Naive thymus-derived CD8-positive, alpha-beta T cell (primary cell): ENCODE measurements at regions of chr5 and their contacts with region 1.

Region 1: DNA sequence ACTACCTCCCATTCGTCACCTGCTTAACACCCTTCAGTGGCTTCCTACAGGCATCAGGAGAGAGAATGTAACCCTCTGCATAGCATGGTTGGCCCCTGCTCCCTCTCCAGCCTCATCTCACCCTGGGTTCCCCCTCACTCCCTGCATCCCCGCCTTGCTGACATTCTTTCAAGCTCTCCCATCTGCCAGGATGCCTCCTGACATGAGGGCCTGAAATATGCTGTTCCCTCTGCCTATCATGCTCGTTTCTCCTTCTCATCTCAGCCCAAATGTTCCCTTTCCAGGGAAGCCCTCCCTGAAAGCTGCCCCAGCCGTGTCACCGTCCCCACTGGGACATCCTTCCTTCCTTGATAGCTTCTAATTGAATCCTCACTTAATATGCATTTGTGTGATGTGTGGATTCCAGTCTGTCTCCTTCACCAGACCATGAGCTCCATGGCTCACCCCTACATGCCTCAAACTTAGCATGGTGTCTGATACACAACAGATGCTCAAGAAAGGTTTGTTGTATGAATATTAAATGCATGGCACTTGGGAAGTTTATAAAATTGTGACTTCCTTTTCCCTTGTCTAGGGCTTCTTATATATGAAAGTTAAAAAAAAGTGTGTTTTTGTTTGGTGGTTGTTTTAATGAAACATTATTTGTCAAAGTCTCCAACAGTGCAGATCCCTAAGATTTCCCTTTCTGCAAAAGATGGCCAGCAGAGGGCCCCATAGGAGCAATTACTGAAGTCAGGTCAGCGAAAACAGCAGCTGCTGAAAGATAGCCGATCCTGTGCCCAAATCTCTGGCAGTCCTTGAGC is 7.3 kb upstream of the C5orf58 start:
- DNase-seq: peak; percentile 44 to 87 (median 72)
- ATAC-seq: peak; percentile 54 to 86
- H3K4me3 Mint-ChIP-seq: peak overlapping the region in 1 of 10 donors; percentile 43
- H3K27ac Mint-ChIP-seq: peak overlapping the region in 5 of 10 donors; percentile 10 to 76 (median 42)
- H3K4me1 Mint-ChIP-seq: peaks cover 3 to 5% (median 4%) of the 10 kb centered on the region in 4 donors
- H3K27me3 Mint-ChIP-seq: no peaks in the 10 kb centered on the region

Region 2: GRCh38 chr5:169029661-169030274 is 1195.8 kb before region 1 on chr5:
- POLR2A ChIA-PET with region 1: no interaction called
- DNase-seq: no peak
- ATAC-seq: no peak
- H3K4me3 Mint-ChIP-seq: no peak overlapping the region
- H3K27ac Mint-ChIP-seq: no peak overlapping the region
- H3K4me1 Mint-ChIP-seq: no peaks in the 10 kb centered on the region
- H3K27me3 Mint-ChIP-seq: peaks cover 4 to 16% (median 6%) of the 10 kb centered on the region in 5 donors

Region 3: GRCh38 chr5:170148430-170149205 is 76.9 kb before region 1 on chr5:
- POLR2A ChIA-PET with region 1: no interaction called
- DNase-seq: no peak
- ATAC-seq: no peak
- H3K4me3 Mint-ChIP-seq: no peak overlapping the region
- H3K27ac Mint-ChIP-seq: no peak overlapping the region
- H3K4me1 Mint-ChIP-seq: no peaks in the 10 kb centered on the region
- H3K27me3 Mint-ChIP-seq: peaks cover 0 to 7% (median under 1%) of the 10 kb centered on the region in 5 donors

Region 4: DNA sequence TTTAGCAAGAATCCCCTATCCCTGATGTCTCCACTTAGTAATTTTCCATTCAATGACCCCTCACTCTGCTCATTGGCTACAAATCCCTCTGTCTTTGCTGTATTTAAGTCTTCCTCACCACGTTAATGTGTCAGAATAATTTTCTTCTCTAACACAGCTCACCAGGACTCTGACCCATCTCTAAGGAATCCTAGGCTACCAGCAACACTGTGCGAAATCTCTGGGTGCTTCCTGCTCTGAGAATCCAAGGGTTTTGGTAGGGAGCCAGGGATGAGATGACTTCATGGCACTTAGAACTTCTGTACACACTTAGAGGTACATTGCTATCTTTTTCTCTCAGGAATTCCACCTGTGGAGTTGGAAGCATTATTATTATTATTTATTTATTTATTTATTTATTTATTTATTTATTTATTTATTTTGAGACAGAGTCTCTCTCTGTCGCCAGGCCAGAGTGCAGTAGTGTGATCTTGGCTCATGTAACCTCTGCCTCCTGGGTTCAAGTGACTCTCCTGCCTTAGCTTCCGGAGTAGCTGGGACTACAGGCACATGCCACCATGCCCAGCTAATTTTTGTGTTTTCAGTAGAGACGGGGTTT is 66.3 kb before region 1 on chr5:
- POLR2A ChIA-PET with region 1: no interaction called
- DNase-seq: no peak
- ATAC-seq: no peak
- H3K4me3 Mint-ChIP-seq: no peak overlapping the region
- H3K27ac Mint-ChIP-seq: no peak overlapping the region
- H3K4me1 Mint-ChIP-seq: peaks cover 0 to 2% (median 0%) of the 10 kb centered on the region in 4 donors
- H3K27me3 Mint-ChIP-seq: peaks cover 0 to 3% (median 0%) of the 10 kb centered on the region in 5 donors

Region 5: DNA sequence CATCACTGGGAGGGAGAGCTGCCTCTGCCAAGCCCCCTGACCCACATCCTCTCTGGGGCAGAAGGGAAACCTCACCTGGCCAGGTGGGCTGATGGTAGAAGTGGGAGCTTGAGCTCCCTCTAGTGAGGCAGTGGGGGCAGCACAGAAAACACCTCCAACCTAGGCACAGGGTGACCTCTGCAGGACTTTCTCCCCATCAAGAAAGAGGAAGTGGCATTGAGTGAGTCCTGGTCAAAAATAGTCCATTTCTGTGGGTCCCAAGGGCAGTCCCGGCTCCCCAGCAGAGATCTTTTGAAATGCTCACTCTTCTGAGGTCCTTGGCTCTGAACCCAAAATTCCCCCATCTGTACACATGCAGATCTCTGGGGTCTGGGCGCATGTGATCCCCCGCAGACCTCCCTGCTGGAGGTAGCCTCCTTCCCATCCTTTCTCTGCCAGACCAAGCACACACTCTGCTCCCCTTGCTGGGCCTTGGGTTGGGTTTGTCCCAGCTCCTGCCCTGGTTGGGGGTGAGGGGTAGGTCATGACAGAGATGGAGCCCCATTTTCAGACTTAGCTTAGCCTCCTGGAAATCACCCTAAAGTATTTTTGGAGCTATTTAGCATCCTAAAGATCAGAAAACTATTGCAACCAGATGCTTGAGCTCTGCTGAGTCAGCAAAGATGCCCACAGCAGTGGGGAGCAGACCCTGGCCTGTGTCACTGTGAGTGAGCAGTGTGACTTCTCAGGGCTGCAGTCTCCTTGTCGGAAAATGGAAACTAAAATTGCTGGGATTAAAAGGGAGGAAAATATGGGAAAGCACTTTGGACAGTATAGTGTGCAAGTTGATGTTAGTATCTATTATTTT is 113.6 kb after region 1 on chr5:
- POLR2A ChIA-PET with region 1: interaction called, 13 read pairs
- DNase-seq: peak in 9 of 10 donors; percentile 52 to 84 (median 64)
- ATAC-seq: peak; percentile 70 to 74
- H3K4me3 Mint-ChIP-seq: peak overlapping the region in 5 of 10 donors; percentile 22 to 57 (median 32)
- H3K27ac Mint-ChIP-seq: peak overlapping the region in 9 of 10 donors; percentile 48 to 94 (median 90)
- H3K4me1 Mint-ChIP-seq: peaks cover 0 to 40% (median 35%) of the 10 kb centered on the region in 4 donors
- H3K27me3 Mint-ChIP-seq: no peaks in the 10 kb centered on the region